Activated CD4-positive, alpha-beta memory T cell treated with anti-CD3 and anti-CD28 coated beads for 36 hours (primary cell): ENCODE measurements at regions of chr6 and their contacts with region 1.

Region 1: GRCh38 chr6:33607784-33608161 is 13.3 kb upstream of the ITPR3 start:
- DNase-seq: peak; percentile 70
- H3K4me3 Mint-ChIP-seq: no peak overlapping the region
- H3K27ac Mint-ChIP-seq: no peak overlapping the region
- H3K4me1 Mint-ChIP-seq: no peaks in the 10 kb centered on the region
- H3K27me3 Mint-ChIP-seq: no peaks in the 10 kb centered on the region

Region 2: GRCh38 chr6:33407132-33407718 is 200.5 kb before region 1 on chr6:
- CTCF ChIA-PET with region 1: no interaction called
- POLR2A ChIA-PET with region 1: no interaction called
- intact Hi-C with region 1: no loop called
- DNase-seq: no peak
- H3K4me3 Mint-ChIP-seq: no peak overlapping the region
- H3K27ac Mint-ChIP-seq: no peak overlapping the region
- H3K4me1 Mint-ChIP-seq: peaks cover 28% of the 10 kb centered on the region
- H3K27me3 Mint-ChIP-seq: no peaks in the 10 kb centered on the region

Region 3: DNA sequence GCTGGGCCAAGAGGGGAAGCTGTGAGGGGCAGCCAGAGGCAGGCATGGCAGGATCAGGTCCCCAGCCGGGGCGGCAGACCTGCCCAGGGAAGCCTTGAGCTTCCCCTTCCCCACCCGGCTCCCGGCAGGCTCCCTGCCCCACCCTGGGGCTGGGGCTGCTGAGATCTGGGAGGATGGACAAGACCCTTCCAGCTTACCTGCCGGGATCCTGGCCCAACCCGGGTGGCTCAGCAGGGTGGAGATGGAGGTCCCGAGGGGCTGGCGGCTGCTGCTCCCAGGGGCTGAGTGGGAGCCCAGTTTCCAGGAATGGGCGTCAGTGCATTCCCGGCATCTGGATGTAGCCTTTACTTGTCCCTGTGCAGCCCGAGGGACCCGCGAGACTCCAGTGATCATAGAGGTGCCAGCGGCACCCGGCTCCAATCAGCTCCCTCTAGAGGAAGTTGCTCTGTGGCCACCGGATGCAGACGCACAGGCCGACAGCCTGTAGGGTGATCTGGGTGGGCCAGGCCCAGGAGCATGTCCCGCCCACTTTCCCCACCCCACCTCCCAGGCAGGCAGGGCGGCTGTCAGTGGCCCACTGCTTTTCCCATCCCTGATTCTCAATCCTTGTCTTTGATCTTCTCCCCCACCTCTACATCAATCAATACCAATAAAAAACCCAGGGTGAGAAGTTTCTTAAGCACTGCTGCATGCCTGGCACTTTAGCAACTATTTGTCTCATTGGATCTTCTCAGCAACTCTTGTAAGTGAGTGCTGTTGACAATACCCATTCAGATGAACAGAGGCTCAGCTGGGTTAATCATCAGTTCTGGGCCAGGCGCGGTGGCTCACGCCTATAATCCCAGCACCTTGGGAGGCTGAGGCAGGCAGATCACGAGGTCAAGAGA is 27.7 kb before region 1 on chr6 and contains the start of gene BAK1:
- CTCF ChIA-PET with region 1: interaction called, 42 read pairs
- POLR2A ChIA-PET with region 1: interaction called, 3 read pairs
- intact Hi-C with region 1: no loop called
- DNase-seq: peak; percentile 93
- H3K4me3 Mint-ChIP-seq: peak within 1 kb of the TSS; percentile 96
- H3K27ac Mint-ChIP-seq: peak within 1 kb of the TSS; percentile 98
- H3K4me1 Mint-ChIP-seq: peaks cover 33% of the 10 kb centered on the region
- H3K27me3 Mint-ChIP-seq: no peaks in the 10 kb centered on the region
- total RNA-seq, gene BAK1: 56.3 to 57.7 TPM

Region 4: GRCh38 chr6:33592411-33593054 is 15.2 kb before region 1 on chr6:
- CTCF ChIA-PET with region 1: interaction called, 42 read pairs
- POLR2A ChIA-PET with region 1: no interaction called
- intact Hi-C with region 1: loop called (anchors 1 kb)
- DNase-seq: peak; percentile 63
- H3K4me3 Mint-ChIP-seq: peak overlapping the region; percentile 60
- H3K27ac Mint-ChIP-seq: no peak overlapping the region
- H3K4me1 Mint-ChIP-seq: peaks cover 37% of the 10 kb centered on the region
- H3K27me3 Mint-ChIP-seq: no peaks in the 10 kb centered on the region

Region 5: GRCh38 chr6:33597551-33598322 is 10.0 kb before region 1 on chr6:
- CTCF ChIA-PET with region 1: interaction called, 11 read pairs
- POLR2A ChIA-PET with region 1: no interaction called
- intact Hi-C with region 1: no loop called
- DNase-seq: no peak
- H3K4me3 Mint-ChIP-seq: no peak overlapping the region
- H3K27ac Mint-ChIP-seq: no peak overlapping the region
- H3K4me1 Mint-ChIP-seq: peaks cover 17% of the 10 kb centered on the region
- H3K27me3 Mint-ChIP-seq: no peaks in the 10 kb centered on the region

Region 6: GRCh38 chr6:33620856-33621710 is 13.3 kb after region 1 on chr6 and contains the start of gene ITPR3:
- CTCF ChIA-PET with region 1: interaction called, 31 read pairs
- POLR2A ChIA-PET with region 1: interaction called, 11 read pairs
- intact Hi-C with region 1: no loop called
- DNase-seq: peak; percentile 85
- H3K4me3 Mint-ChIP-seq: peak within 1 kb of the TSS; percentile 94
- H3K27ac Mint-ChIP-seq: peak within 1 kb of the TSS; percentile 83
- H3K4me1 Mint-ChIP-seq: peaks cover 43% of the 10 kb centered on the region
- H3K27me3 Mint-ChIP-seq: no peaks in the 10 kb centered on the region
- total RNA-seq, gene ITPR3: 41.6 to 45.6 TPM

Region 7: DNA sequence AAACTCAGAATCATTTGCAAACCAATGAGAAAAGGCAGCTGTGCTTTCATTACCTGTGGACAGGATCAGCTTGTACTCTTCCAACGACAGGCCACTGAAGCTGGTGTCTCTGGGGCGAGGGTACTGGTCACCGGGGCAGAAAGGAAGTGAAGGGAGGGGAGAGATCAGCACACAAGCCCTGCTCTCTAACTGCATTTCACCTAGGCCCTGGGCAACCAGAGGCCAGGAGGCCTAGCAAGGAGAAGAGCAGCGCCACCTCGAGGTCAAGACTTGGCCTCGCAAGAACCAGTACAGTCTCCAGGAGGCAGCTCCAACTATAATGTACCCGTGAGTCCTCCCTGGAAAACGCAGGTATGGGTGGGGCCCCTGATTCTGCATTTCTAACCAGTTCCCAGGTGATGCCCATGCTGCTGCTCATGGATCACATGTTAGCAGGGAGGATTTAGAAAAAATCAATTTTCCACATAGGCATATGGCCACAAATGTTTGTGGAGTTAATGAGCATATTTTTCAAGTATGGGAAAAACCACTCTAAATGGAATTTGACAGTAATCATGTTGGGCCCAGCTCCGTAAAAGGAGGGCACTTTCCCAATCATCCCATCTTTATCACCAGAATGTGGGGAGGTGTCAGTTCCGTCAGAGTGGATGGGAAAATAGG is 92.7 kb after region 1 on chr6:
- CTCF ChIA-PET with region 1: interaction called, 10 read pairs
- POLR2A ChIA-PET with region 1: no interaction called
- intact Hi-C with region 1: no loop called
- DNase-seq: peak; percentile 84
- H3K4me3 Mint-ChIP-seq: no peak overlapping the region
- H3K27ac Mint-ChIP-seq: peak overlapping the region; percentile 73
- H3K4me1 Mint-ChIP-seq: peaks cover 37% of the 10 kb centered on the region
- H3K27me3 Mint-ChIP-seq: no peaks in the 10 kb centered on the region